Activated B cell treated with CpG ODN at 0.5 μM for 24 hours (primary cell): ENCODE measurements at regions of chr15 and their contacts with region 1.

Region 1: GRCh38 chr15:40493089-40493840 is 22.5 kb downstream of the CHST14 start:
- DNase-seq: no peak
- ATAC-seq: no peak
- H3K4me3 Mint-ChIP-seq: no peak overlapping the region
- H3K27ac Mint-ChIP-seq: no peak overlapping the region
- H3K4me1 Mint-ChIP-seq: no peaks in the 10 kb centered on the region
- H3K27me3 Mint-ChIP-seq: peaks cover 13% of the 10 kb centered on the region
- CTCF ChIP-seq: no peak

Region 2: GRCh38 chr15:40323239-40323952 is 169.9 kb before region 1 on chr15 and contains the start of gene INAFM2:
- CTCF ChIA-PET with region 1: no interaction called
- POLR2A ChIA-PET with region 1: no interaction called
- intact Hi-C with region 1: no loop called
- DNase-seq: peak; percentile 88
- ATAC-seq: peak; percentile 92
- H3K4me3 Mint-ChIP-seq: peak within 1 kb of the TSS; percentile 80
- H3K27ac Mint-ChIP-seq: peak within 1 kb of the TSS; percentile 65
- H3K4me1 Mint-ChIP-seq: peaks cover 29% of the 10 kb centered on the region
- H3K27me3 Mint-ChIP-seq: no peaks in the 10 kb centered on the region
- CTCF ChIP-seq: no peak
- total RNA-seq, gene INAFM2: 9.5 TPM in 2 replicates

Region 3: DNA sequence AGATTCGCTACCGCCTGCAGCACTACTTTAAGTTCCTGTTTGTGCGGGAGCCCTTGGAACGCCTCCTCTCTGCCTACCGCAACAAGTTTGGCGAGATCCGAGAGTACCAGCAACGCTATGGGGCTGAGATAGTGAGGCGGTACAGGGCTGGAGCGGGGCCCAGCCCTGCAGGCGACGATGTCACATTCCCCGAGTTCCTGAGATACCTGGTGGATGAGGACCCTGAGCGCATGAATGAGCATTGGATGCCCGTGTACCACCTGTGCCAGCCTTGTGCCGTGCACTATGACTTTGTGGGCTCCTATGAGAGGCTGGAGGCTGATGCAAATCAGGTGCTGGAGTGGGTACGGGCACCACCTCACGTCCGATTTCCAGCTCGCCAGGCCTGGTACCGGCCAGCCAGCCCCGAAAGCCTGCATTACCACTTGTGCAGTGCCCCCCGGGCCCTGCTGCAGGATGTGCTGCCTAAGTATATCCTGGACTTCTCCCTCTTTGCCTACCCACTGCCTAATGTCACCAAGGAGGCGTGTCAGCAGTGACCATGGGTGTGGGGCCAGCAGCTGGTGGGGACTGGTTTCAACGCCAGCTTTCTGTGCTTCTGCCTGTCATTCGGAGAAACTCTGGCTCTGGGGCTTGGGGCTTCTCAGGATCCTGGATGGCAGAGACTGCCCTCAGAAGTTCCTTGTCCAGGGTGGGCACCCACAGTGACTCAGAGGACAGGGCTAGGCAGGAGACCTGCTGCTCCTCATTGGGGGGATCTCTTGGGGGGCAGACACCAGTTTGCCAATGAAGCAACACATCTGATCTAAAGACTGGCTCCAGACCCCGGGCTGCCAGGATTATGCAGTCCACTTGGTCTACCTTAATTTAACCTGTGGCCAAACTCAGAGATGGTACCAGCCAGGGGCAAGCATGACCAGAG is 21.2 kb before region 1 on chr15:
- CTCF ChIA-PET with region 1: no interaction called
- POLR2A ChIA-PET with region 1: no interaction called
- intact Hi-C with region 1: no loop called
- DNase-seq: peak; percentile 23
- ATAC-seq: peak; percentile 16
- H3K4me3 Mint-ChIP-seq: peak overlapping the region; percentile 88
- H3K27ac Mint-ChIP-seq: peak overlapping the region; percentile 76
- H3K4me1 Mint-ChIP-seq: peaks cover 10% of the 10 kb centered on the region
- H3K27me3 Mint-ChIP-seq: no peaks in the 10 kb centered on the region
- CTCF ChIP-seq: no peak

Region 4: GRCh38 chr15:41323611-41324010 is 830.3 kb after region 1 on chr15:
- CTCF ChIA-PET with region 1: no interaction called
- POLR2A ChIA-PET with region 1: interaction called, 11 read pairs
- intact Hi-C with region 1: no loop called
- DNase-seq: no peak
- ATAC-seq: no peak
- H3K4me3 Mint-ChIP-seq: no peak overlapping the region
- H3K27ac Mint-ChIP-seq: no peak overlapping the region
- H3K4me1 Mint-ChIP-seq: no peaks in the 10 kb centered on the region
- H3K27me3 Mint-ChIP-seq: no peaks in the 10 kb centered on the region
- CTCF ChIP-seq: no peak